HepG2 (cell line): ENCODE measurements at regions of chr11 and their contacts with region 1.

Region 1: DNA sequence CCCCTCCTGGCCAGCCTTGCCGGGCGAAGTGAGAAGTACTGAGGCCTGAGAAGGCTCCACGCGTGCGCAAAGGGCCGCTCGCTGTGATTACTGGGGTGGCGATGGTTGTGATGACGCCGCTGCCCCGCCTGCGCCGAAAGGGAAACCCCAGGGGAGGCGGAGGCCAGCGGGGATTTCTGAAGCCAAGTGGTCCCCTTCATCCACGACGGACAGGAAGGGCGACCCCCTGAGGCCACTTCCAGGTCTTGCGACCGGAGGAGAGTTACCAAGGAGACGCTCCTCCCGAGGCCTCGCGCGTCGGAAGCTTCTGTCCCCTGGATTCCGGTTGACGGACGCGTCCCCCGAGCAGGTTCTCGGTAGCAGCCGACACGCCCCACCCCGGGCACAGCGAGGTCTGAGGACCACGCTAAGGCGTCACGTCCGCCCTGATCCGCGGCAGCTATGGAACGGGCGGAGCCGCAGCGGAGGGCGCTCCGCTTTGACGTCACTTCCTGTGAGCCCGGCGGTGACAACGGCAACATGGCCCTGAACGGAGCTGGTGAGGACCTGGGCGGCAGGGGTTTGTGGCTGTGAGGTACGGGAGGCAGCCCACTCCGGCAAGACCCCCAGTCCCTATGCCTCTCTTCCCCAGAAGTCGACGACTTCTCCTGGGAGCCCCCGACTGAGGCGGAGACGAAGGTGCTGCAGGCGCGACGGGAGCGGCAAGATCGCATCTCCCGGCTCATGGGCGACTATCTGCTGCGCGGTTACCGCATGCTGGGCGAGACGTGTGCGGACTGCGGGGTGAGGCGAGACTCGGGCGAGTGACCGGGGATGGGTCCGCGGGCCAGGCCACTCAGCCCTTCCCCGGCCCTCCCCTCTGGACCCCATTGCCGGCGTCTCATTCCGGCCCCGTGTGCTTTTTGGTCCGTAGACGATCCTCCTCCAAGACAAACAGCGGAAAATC is at the start of gene ZNRD2:
- DNase-seq: peak; percentile 96
- ATAC-seq: peak; percentile 87
- H3K4me3 ChIP-seq: peak within 1 kb of the TSS; percentile 85 to 99 (median 95)
- H3K27ac ChIP-seq: peak within 1 kb of the TSS; percentile 85
- H3K4me1 ChIP-seq: peaks cover 42% of the 10 kb centered on the region
- H3K27me3 ChIP-seq: no peaks in the 10 kb centered on the region; a peak in 1 of 5 replicates
- CTCF ChIP-seq: peak; percentile 93
- EP300 ChIP-seq: no peak
- POLR2A ChIP-seq: peak in 1 of 2 experiments; percentile 52; a peak in 1 of 4 replicates
- RAD21 ChIP-seq: peak; percentile 87
- total RNA-seq, gene ZNRD2: 34.0 and 40.0 TPM in 2 replicates

Region 2: DNA sequence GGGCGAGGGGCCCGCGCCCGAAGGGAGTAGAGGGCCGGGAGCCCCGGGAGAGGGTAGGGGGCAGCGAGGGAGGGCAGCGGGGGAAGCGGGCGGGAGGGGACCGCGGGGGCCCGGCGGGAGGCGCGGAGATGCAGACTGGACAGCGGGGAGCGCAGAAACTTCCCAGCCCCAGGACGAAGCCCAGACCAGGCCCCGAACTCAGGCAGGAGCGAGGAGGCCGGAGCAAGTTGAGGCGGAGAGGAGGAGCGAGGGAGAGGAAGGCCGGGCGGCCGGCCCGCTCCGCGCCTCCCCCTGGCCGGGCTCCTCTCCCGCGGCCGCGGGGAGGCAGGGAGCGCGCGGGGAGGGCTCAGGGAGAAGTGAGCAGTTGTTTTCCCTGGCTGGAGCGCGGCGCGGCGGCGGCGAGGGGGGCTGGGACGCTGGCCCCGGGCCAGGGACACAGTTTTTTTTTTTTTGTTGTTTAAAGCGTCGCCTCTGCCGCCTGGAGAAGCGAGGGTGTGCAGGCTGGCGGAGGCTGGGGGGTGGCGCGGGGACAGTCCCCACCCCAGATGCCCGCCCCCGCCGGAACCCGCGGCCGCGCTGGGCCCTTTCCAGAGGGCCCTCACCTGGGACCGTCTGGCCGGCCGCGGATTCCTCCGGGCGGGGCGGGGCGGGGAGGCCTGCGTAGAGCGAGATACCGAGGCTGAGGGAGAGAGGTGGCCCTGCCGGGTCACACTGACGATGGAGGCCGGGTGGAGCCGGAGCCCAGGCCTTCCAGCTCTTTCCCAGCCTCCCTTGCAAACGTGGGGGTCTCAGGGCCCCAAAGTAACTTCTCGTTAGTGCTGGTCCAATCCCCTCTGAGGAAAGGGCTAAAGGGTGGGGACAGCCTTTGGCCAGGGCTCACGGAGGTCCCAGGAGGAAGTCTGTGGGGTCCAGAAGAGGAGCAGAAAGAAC is 12.0 kb before region 1 on chr11 and contains the start of gene LTBP3:
- CTCF ChIA-PET with region 1: no interaction called
- POLR2A ChIA-PET with region 1: interaction called, 34 read pairs
- in situ Hi-C with region 1: no loop called
- intact Hi-C with region 1: no loop called
- DNase-seq: peak; percentile 68
- ATAC-seq: peak; percentile 58
- H3K4me3 ChIP-seq: peak within 1 kb of the TSS; percentile 74 to 89 (median 87)
- H3K27ac ChIP-seq: peak within 1 kb of the TSS; percentile 94
- H3K4me1 ChIP-seq: peaks cover 72% of the 10 kb centered on the region
- H3K27me3 ChIP-seq: no peaks in the 10 kb centered on the region
- CTCF ChIP-seq: no peak
- EP300 ChIP-seq: no peak
- POLR2A ChIP-seq: no peak
- RAD21 ChIP-seq: no peak
- total RNA-seq, gene LTBP3: 4.2 and 12.2 TPM in 2 replicates

Region 3: GRCh38 chr11:65588199-65589054 is 18.2 kb after region 1 on chr11:
- CTCF ChIA-PET with region 1: interaction called, 16 read pairs
- POLR2A ChIA-PET with region 1: interaction called, 4 read pairs
- in situ Hi-C with region 1: no loop called
- intact Hi-C with region 1: no loop called
- DNase-seq: peak; percentile 73
- ATAC-seq: peak; percentile 90
- H3K4me3 ChIP-seq: no peak overlapping the region
- H3K27ac ChIP-seq: no peak overlapping the region
- H3K4me1 ChIP-seq: peaks cover 25% of the 10 kb centered on the region
- H3K27me3 ChIP-seq: no peaks in the 10 kb centered on the region
- CTCF ChIP-seq: peak; percentile 86
- EP300 ChIP-seq: no peak
- POLR2A ChIP-seq: no peak
- RAD21 ChIP-seq: peak; percentile 84